PC-3 (cell line): ENCODE measurements at regions of chr1 and their contacts with region 1.

Region 1: GRCh38 chr1:119367427-119368124 is 1.0 kb upstream of the HAO2 start:
- DNase-seq: peak; percentile 74
- ATAC-seq: peak; percentile 62
- H3K4me3 ChIP-seq: no peak overlapping the region
- H3K27ac ChIP-seq: no peak overlapping the region
- H3K4me1 ChIP-seq: peaks cover 8% of the 10 kb centered on the region; the same call in 1 of the 2 replicates
- H3K27me3 ChIP-seq: peaks cover 15% of the 10 kb centered on the region
- CTCF ChIP-seq: peak; percentile 97

Region 2: GRCh38 chr1:119116725-119117124 is 250.9 kb before region 1 on chr1:
- CTCF ChIA-PET with region 1: no interaction called
- POLR2A ChIA-PET with region 1: no interaction called
- intact Hi-C with region 1: no loop called
- DNase-seq: no peak
- ATAC-seq: no peak
- H3K4me3 ChIP-seq: no peak overlapping the region
- H3K27ac ChIP-seq: no peak overlapping the region
- H3K4me1 ChIP-seq: no peaks in the 10 kb centered on the region
- H3K27me3 ChIP-seq: no peaks in the 10 kb centered on the region
- CTCF ChIP-seq: no peak

Region 3: GRCh38 chr1:119140177-119141019 is 227.2 kb before region 1 on chr1 and contains the start of gene WARS2:
- CTCF ChIA-PET with region 1: no interaction called
- POLR2A ChIA-PET with region 1: no interaction called
- intact Hi-C with region 1: loop called (anchors 5 kb)
- DNase-seq: peak; percentile 97
- ATAC-seq: peak; percentile 97
- H3K4me3 ChIP-seq: peak within 1 kb of the TSS; percentile 74
- H3K27ac ChIP-seq: peak within 1 kb of the TSS; percentile 93
- H3K4me1 ChIP-seq: peaks cover 32% of the 10 kb centered on the region
- H3K27me3 ChIP-seq: no peaks in the 10 kb centered on the region
- CTCF ChIP-seq: no peak
- total RNA-seq, gene WARS2: 16.8 and 18.1 TPM in 2 replicates

Region 4: GRCh38 chr1:119286587-119287181 is 80.9 kb before region 1 on chr1:
- CTCF ChIA-PET with region 1: no interaction called
- POLR2A ChIA-PET with region 1: no interaction called
- intact Hi-C with region 1: loop called (anchors 1 kb)
- DNase-seq: peak; percentile 74
- ATAC-seq: peak; percentile 92
- H3K4me3 ChIP-seq: no peak overlapping the region
- H3K27ac ChIP-seq: no peak overlapping the region
- H3K4me1 ChIP-seq: peaks cover 6% of the 10 kb centered on the region; the same call in 1 of the 2 replicates
- H3K27me3 ChIP-seq: no peaks in the 10 kb centered on the region
- CTCF ChIP-seq: peak; percentile 86

Region 5: GRCh38 chr1:119488216-119488615 is 120.6 kb after region 1 on chr1:
- CTCF ChIA-PET with region 1: no interaction called
- POLR2A ChIA-PET with region 1: no interaction called
- intact Hi-C with region 1: no loop called
- DNase-seq: no peak
- ATAC-seq: no peak
- H3K4me3 ChIP-seq: no peak overlapping the region
- H3K27ac ChIP-seq: no peak overlapping the region
- H3K4me1 ChIP-seq: no peaks in the 10 kb centered on the region
- H3K27me3 ChIP-seq: peaks cover 4% of the 10 kb centered on the region; the same call in 1 of the 2 replicates
- CTCF ChIP-seq: no peak